H1 (cell line): ENCODE measurements at regions of chr4 and their contacts with region 1.

Region 1: DNA sequence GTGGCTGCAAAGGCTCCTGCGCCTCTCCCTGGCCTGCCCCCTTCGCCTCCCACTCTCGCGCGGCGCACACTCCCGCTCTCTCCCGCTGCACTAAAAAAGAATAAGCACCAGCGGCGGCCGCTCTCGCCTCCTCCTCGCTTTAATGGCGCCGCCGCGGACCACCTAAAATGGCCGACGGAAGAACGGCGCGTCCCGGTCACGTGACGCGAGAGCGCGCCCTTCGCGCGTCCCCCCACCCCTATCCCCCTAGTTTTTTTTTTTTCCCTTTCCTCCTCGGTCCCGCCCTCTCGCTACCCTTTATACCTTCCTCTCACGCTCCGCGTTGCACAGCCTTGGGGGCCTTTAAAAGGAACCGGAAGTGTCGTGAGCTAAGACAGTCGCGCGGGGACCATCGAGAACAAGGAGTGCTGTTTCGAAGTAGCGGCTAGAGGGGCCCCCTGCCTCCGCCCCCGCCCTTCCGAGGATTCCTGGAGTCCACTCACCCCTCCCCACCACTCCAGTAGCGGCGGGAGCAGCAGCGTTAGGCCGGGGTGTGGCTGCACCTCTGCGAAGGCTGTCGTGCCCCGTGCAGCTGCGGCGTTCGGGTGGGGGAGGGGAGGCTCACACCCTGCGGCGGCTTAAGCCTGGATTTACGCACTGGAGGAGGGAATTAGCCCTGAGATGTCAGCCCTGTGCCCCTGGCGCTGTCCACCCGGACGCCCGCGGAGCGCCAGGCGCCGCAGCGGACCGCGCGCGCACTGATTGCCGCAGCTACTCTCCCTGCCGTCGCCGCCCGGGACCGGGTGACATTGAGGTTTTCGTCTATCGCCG is at the start of gene HNRNPD:
- DNase-seq: peak; percentile 94 to 96
- H3K4me3 ChIP-seq: peak within 1 kb of the TSS; percentile 91 to 99 (median 97)
- H3K27ac ChIP-seq: peak within 1 kb of the TSS; percentile 99
- H3K4me1 ChIP-seq: no peaks in the 10 kb centered on the region; a peak in 2 of 7 replicates
- H3K27me3 ChIP-seq: no peaks in the 10 kb centered on the region
- CTCF ChIP-seq: no peak
- EP300 ChIP-seq: peak in 1 of 2 experiments; percentile 70; a peak in 1 of 3 replicates
- POLR2A ChIP-seq: peak; percentile 86; a peak in 2 of 3 replicates
- RAD21 ChIP-seq: peak in 1 of 2 experiments; percentile 22; a peak in 3 of 4 replicates
- total RNA-seq, gene HNRNPD: 642 and 646 TPM in 2 replicates

Region 2: GRCh38 chr4:82248903-82249632 is 125.0 kb before region 1 on chr4:
- CTCF ChIA-PET with region 1: no interaction called
- POLR2A ChIA-PET with region 1: no interaction called
- DNase-seq: no peak
- H3K4me3 ChIP-seq: no peak overlapping the region
- H3K27ac ChIP-seq: no peak overlapping the region
- H3K4me1 ChIP-seq: no peaks in the 10 kb centered on the region
- H3K27me3 ChIP-seq: no peaks in the 10 kb centered on the region
- CTCF ChIP-seq: no peak
- EP300 ChIP-seq: no peak
- POLR2A ChIP-seq: no peak
- RAD21 ChIP-seq: no peak

Region 3: GRCh38 chr4:82352913-82353366 is 21.1 kb before region 1 on chr4:
- CTCF ChIA-PET with region 1: no interaction called
- POLR2A ChIA-PET with region 1: interaction called, 56 read pairs
- DNase-seq: no peak
- H3K4me3 ChIP-seq: no peak overlapping the region
- H3K27ac ChIP-seq: no peak overlapping the region
- H3K4me1 ChIP-seq: no peaks in the 10 kb centered on the region
- H3K27me3 ChIP-seq: peaks cover 0 to 1% (median 0%) of the 10 kb centered on the region in 4 experiments; a peak in 1 of 7 replicates
- CTCF ChIP-seq: no peak
- EP300 ChIP-seq: no peak
- POLR2A ChIP-seq: no peak
- RAD21 ChIP-seq: no peak

Region 4: GRCh38 chr4:82360298-82361177 is 13.5 kb before region 1 on chr4:
- CTCF ChIA-PET with region 1: interaction called, 12 read pairs
- POLR2A ChIA-PET with region 1: interaction called, 56 read pairs
- DNase-seq: no peak
- H3K4me3 ChIP-seq: no peak overlapping the region
- H3K27ac ChIP-seq: no peak overlapping the region; the same call in 1 of the 2 replicates
- H3K4me1 ChIP-seq: no peaks in the 10 kb centered on the region; a peak in 1 of 7 replicates
- H3K27me3 ChIP-seq: peaks cover 0 to 1% (median 0%) of the 10 kb centered on the region in 4 experiments; a peak in 1 of 7 replicates
- CTCF ChIP-seq: peak in 1 of 3 experiments; percentile 56; a peak in 2 of 4 replicates
- EP300 ChIP-seq: no peak
- POLR2A ChIP-seq: no peak
- RAD21 ChIP-seq: peak; percentile 45 to 56

Region 5: DNA sequence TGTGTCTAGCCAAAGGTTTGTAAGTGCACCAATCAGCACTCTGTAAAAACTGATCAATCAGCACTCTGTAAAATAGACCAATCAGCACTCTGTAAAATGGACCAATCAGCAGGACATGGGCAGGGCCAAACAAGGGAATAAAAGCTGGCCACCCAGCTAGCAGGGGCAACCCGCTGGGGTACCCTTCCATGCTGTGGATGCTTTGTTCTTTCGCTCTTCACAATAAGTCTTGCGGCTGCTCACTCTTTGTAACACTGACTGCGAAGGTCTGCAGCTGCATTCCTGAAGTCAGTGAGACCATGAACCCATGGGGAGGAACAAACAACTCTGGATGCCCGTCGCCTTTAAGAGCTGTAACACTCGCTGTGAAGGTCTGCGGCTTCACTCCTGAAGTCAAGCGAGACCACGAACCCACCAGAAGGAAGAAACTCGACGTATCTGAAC is 41.9 kb after region 1 on chr4:
- CTCF ChIA-PET with region 1: no interaction called
- POLR2A ChIA-PET with region 1: interaction called, 12 read pairs
- DNase-seq: no peak
- H3K4me3 ChIP-seq: no peak overlapping the region; a peak in 1 of 8 replicates
- H3K27ac ChIP-seq: no peak overlapping the region
- H3K4me1 ChIP-seq: no peaks in the 10 kb centered on the region
- H3K27me3 ChIP-seq: no peaks in the 10 kb centered on the region
- CTCF ChIP-seq: no peak
- EP300 ChIP-seq: no peak
- POLR2A ChIP-seq: peak in 1 of 2 experiments; percentile 52; a peak in 1 of 3 replicates
- RAD21 ChIP-seq: no peak